Naive thymus-derived CD4-positive, alpha-beta T cell (primary cell): ENCODE measurements at regions of chr13 and their contacts with region 1.

Region 1: DNA sequence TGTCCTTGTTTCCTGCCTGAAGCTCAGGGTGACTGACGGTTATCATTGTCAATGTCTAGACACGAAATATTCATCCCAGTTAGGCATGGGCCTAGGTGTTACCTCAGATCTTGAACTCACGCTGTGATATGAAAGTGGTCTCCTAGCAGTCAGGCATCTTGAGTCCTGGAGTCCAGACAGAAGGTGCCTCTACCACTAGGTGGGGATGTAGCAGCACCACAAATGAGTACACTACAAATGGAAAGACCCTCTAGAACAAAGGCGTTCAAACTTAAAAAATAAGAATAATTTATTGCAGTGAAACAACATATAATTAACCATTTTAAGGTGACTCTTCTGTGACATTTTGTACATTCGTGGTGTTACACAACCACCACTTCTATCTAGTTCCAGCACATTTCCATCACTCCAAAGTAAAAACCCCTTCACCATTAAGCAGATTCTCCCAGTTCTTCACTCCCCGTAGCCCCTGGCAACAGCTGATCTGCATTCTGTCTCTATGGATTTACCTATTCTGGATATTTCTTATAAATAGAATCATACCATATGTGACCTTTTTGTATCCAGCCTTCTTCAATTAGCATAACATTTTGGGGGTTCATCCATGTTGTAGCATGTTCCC is 11.9 kb upstream of the FRY start:
- DNase-seq: peak in 6 of 9 donors; percentile 22 to 52 (median 35)
- ATAC-seq: peak; percentile 68
- H3K4me3 ChIP-seq: no peak overlapping the region
- H3K4me3 Mint-ChIP-seq: no peak overlapping the region
- H3K27ac ChIP-seq: no peak overlapping the region
- H3K27ac Mint-ChIP-seq: no peak overlapping the region
- H3K4me1 ChIP-seq: no peaks in the 10 kb centered on the region
- H3K4me1 Mint-ChIP-seq: no peaks in the 10 kb centered on the region
- H3K27me3 ChIP-seq: no peaks in the 10 kb centered on the region
- H3K27me3 Mint-ChIP-seq: peaks cover 0 to 5% (median 0%) of the 10 kb centered on the region in 5 donors

Region 2: GRCh38 chr13:32031025-32031814 is 11.5 kb after region 1 on chr13 and contains the start of gene FRY:
- CTCF ChIA-PET with region 1: no interaction called
- POLR2A ChIA-PET with region 1: interaction called, 3 read pairs
- intact Hi-C with region 1: loop called in 1 of 2 experiments (anchors 1 kb)
- DNase-seq: peak; percentile 34 to 67 (median 58)
- ATAC-seq: peak; percentile 86
- H3K4me3 ChIP-seq: peak within 1 kb of the TSS; percentile 71
- H3K4me3 Mint-ChIP-seq: peak within 1 kb of the TSS; percentile 82 to 99 (median 90)
- H3K27ac ChIP-seq: peak within 1 kb of the TSS; percentile 72
- H3K27ac Mint-ChIP-seq: peak within 1 kb of the TSS; percentile 77 to 97 (median 83)
- H3K4me1 ChIP-seq: peaks cover 3 to 16% of the 10 kb centered on the region in 2 donors
- H3K4me1 Mint-ChIP-seq: peaks cover 7 to 65% (median 49%) of the 10 kb centered on the region in 7 donors
- H3K27me3 ChIP-seq: no peaks in the 10 kb centered on the region
- H3K27me3 Mint-ChIP-seq: peaks cover 7 to 49% (median 13%) of the 10 kb centered on the region in 5 donors
- total RNA-seq, gene FRY: 9.9 to 39.9 (median 24.0) TPM

Region 3: DNA sequence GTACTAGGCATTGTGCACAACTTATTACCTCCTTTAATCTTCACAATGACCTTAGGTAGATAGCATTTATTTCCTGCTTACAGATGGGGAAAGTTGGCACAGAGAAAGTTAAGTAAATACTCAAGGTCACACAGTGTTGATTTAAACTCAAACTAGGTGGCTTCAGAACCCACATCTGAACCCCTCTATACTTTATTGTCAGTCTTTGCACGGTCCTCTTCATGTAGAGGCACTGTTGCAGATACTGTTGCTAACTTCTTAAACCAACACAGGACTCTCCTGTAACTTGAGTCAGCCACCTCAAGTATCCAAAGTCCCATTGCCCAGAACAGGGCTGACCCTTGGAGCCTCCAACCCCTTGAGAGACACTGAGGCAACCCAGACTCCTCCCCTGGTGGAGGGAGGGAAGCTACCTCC is 60.6 kb after region 1 on chr13:
- CTCF ChIA-PET with region 1: no interaction called
- POLR2A ChIA-PET with region 1: no interaction called
- intact Hi-C with region 1: loop called in 1 of 2 experiments (anchors 5 kb)
- DNase-seq: no peak
- ATAC-seq: no peak
- H3K4me3 ChIP-seq: no peak overlapping the region
- H3K4me3 Mint-ChIP-seq: no peak overlapping the region
- H3K27ac ChIP-seq: no peak overlapping the region
- H3K27ac Mint-ChIP-seq: peak overlapping the region in 1 of 9 donors; percentile 14
- H3K4me1 ChIP-seq: no peaks in the 10 kb centered on the region
- H3K4me1 Mint-ChIP-seq: peaks cover 0 to 10% (median 3%) of the 10 kb centered on the region in 7 donors
- H3K27me3 ChIP-seq: no peaks in the 10 kb centered on the region
- H3K27me3 Mint-ChIP-seq: peaks cover 0 to 3% (median 0%) of the 10 kb centered on the region in 5 donors

Region 4: GRCh38 chr13:32164622-32165268 is 145.0 kb after region 1 on chr13:
- CTCF ChIA-PET with region 1: interaction called, 3 read pairs
- POLR2A ChIA-PET with region 1: no interaction called
- intact Hi-C with region 1: loop called in 1 of 2 experiments (anchors 1 kb)
- DNase-seq: peak in 6 of 9 donors; percentile 3 to 47 (median 32)
- ATAC-seq: peak; percentile 63
- H3K4me3 ChIP-seq: no peak overlapping the region
- H3K4me3 Mint-ChIP-seq: no peak overlapping the region
- H3K27ac ChIP-seq: no peak overlapping the region
- H3K27ac Mint-ChIP-seq: peak overlapping the region in 2 of 9 donors; percentile 14 to 17
- H3K4me1 ChIP-seq: no peaks in the 10 kb centered on the region
- H3K4me1 Mint-ChIP-seq: peaks cover 0 to 2% (median 0%) of the 10 kb centered on the region in 7 donors
- H3K27me3 ChIP-seq: no peaks in the 10 kb centered on the region
- H3K27me3 Mint-ChIP-seq: no peaks in the 10 kb centered on the region

Region 5: DNA sequence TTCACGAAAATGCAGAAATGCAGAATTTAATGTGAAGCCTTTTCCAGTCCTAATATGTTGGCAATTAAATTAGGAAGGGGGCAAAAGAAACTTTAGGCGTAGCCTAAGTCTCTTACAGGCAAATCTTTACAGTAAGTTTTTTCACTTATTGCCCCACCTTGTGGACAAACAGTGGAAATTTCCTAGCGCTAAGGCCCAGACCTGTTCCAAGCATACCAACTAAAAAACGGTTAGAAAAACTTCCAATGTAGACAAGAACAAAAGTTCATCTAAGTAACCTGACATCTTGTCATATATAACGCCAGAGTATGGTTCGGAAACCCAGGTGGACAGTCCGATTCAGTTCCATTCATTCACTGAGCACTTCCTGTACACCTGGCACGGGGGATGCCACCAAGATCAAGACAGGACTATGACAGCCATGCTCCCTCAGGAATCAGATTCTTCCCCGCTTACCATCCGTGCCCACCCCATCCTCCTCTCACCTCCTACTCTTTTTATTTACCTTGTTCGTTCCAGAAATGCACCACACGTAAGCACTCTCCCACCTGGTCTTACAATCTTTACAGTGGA is 290.5 kb after region 1 on chr13:
- CTCF ChIA-PET with region 1: no interaction called
- POLR2A ChIA-PET with region 1: no interaction called
- intact Hi-C with region 1: loop called (anchors 1 kb)
- DNase-seq: peak in 7 of 9 donors; percentile 16 to 64 (median 51)
- ATAC-seq: peak; percentile 58
- H3K4me3 ChIP-seq: no peak overlapping the region
- H3K4me3 Mint-ChIP-seq: peak overlapping the region in 7 of 10 donors; percentile 10 to 61 (median 28)
- H3K27ac ChIP-seq: no peak overlapping the region
- H3K27ac Mint-ChIP-seq: peak overlapping the region in 1 of 9 donors; percentile 18
- H3K4me1 ChIP-seq: peaks cover 5 to 7% of the 10 kb centered on the region in 2 donors
- H3K4me1 Mint-ChIP-seq: peaks cover 13 to 28% (median 14%) of the 10 kb centered on the region in 7 donors
- H3K27me3 ChIP-seq: no peaks in the 10 kb centered on the region
- H3K27me3 Mint-ChIP-seq: peaks cover 0 to 2% (median 0%) of the 10 kb centered on the region in 5 donors